Sigmoid colon (tissue), 7 donors: ENCODE measurements at regions of chr19 and their contacts with region 1.

Region 1: GRCh38 chr19:56076498-56076897 is 44.6 kb downstream of the ZNF787 start:
- DNase-seq: no peak
- H3K4me3 ChIP-seq: no peak overlapping the region
- H3K27ac ChIP-seq: no peak overlapping the region
- H3K4me1 ChIP-seq: peaks cover 0 to 10% (median 10%) of the 10 kb centered on the region in 4 donors
- H3K27me3 ChIP-seq: peaks cover 0 to 13% (median 0%) of the 10 kb centered on the region in 3 donors
- CTCF ChIP-seq: peak; percentile 68 to 86 (median 77)
- EP300 ChIP-seq: no peak
- POLR2A ChIP-seq: no peak

Region 2: GRCh38 chr19:56170261-56170660 is 93.8 kb after region 1 on chr19:
- intact Hi-C with region 1: loop called (anchors 1 kb)
- DNase-seq: no peak
- H3K4me3 ChIP-seq: no peak overlapping the region
- H3K27ac ChIP-seq: no peak overlapping the region
- H3K4me1 ChIP-seq: no peaks in the 10 kb centered on the region
- H3K27me3 ChIP-seq: peaks cover 0 to 22% (median under 1%) of the 10 kb centered on the region in 3 donors
- CTCF ChIP-seq: no peak
- EP300 ChIP-seq: no peak
- POLR2A ChIP-seq: no peak

Region 3: GRCh38 chr19:56252699-56253422 is 176.4 kb after region 1 on chr19:
- intact Hi-C with region 1: loop called (anchors 5 kb)
- DNase-seq: peak; percentile 73
- H3K4me3 ChIP-seq: no peak overlapping the region
- H3K27ac ChIP-seq: no peak overlapping the region
- H3K4me1 ChIP-seq: peaks cover 0 to 3% (median 0%) of the 10 kb centered on the region in 4 donors
- H3K27me3 ChIP-seq: peaks cover 0 to 3% (median 0%) of the 10 kb centered on the region in 3 donors
- CTCF ChIP-seq: peak in 3 of 4 experiments; percentile 67 to 74 (median 68)
- EP300 ChIP-seq: no peak
- POLR2A ChIP-seq: no peak

Region 4: DNA sequence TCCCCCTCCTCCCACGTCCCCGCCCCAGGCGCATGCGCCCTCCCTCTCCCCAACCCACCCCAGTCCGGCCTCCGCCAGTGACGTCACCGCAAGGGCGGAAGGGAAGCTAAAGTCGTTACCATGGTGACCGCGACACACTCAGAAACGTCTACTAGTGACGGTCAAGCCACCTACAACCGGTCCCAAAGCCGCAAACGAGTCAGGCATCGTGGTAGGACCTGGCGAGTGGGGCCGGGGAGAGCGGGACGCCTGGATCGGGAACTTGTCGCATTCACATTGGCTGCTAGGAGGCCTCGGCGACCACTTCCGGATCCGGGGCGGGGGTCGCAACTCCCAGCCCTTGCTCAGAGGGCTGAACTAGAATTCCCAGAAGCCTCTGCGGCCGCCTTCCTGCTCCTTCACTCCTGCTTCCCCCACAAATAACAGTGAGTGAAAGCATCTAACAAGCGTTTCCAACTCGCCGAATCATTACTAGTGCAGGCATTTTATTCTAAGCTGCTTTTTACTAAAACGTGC is 238.1 kb after region 1 on chr19 and contains the start of gene ZSCAN5A:
- intact Hi-C with region 1: loop called (anchors 10 kb)
- DNase-seq: peak; percentile 99
- H3K4me3 ChIP-seq: peak within 1 kb of the TSS; percentile 47 to 76 (median 68)
- H3K27ac ChIP-seq: peak within 1 kb of the TSS; percentile 94 to 97 (median 95)
- H3K4me1 ChIP-seq: peaks cover 0 to 18% (median 11%) of the 10 kb centered on the region in 4 donors
- H3K27me3 ChIP-seq: no peaks in the 10 kb centered on the region
- CTCF ChIP-seq: no peak
- EP300 ChIP-seq: no peak
- POLR2A ChIP-seq: peak; percentile 14 to 40
- total RNA-seq, gene ZSCAN5A: 4.3 to 5.8 (median 5.4) TPM

Region 5: GRCh38 chr19:56350416-56351045 is 274.0 kb after region 1 on chr19:
- intact Hi-C with region 1: loop called (anchors 2 kb)
- DNase-seq: no peak
- H3K4me3 ChIP-seq: no peak overlapping the region
- H3K27ac ChIP-seq: no peak overlapping the region
- H3K4me1 ChIP-seq: no peaks in the 10 kb centered on the region
- H3K27me3 ChIP-seq: no peaks in the 10 kb centered on the region
- CTCF ChIP-seq: peak; percentile 64 to 82 (median 75)
- EP300 ChIP-seq: no peak
- POLR2A ChIP-seq: no peak